Natural killer cell (primary cell): ENCODE measurements at regions of chr17 and their contacts with region 1.

Region 1: DNA sequence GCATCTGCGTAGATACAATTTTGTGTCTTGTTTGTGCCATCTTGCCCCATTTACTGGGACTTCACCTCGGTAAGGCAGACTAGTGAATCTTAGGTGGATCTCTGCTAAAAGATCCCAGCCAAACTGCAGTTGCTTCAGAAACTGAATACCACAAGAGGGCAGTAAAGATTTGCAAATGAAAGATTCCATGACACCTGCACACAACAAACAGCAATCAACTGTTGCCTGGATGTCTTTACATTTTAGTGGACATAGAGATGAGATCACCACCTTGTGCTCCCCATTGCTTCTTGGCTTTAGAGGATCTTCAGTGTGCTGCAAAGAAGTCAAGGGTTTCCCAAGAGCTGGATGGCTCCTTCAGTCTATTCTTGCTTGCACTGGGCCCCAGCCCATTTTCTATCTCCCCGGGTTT is 119.2 kb upstream of the CACNG5 start:
- DNase-seq: peak in 1 of 2 donors; percentile 65
- ATAC-seq: peak in 1 of 3 donors; percentile 24
- H3K4me3 ChIP-seq: no peak overlapping the region
- H3K4me3 Mint-ChIP-seq: no peak overlapping the region
- H3K27ac ChIP-seq: no peak overlapping the region
- H3K27ac Mint-ChIP-seq: no peak overlapping the region
- H3K4me1 ChIP-seq: peaks cover 46% of the 10 kb centered on the region
- H3K4me1 Mint-ChIP-seq: peaks cover 35 to 43% of the 10 kb centered on the region in 2 donors
- H3K27me3 ChIP-seq: no peaks in the 10 kb centered on the region
- H3K27me3 Mint-ChIP-seq: no peaks in the 10 kb centered on the region
- CTCF ChIP-seq: peak; percentile 64

Region 2: GRCh38 chr17:66655861-66656260 is 59.9 kb before region 1 on chr17:
- intact Hi-C with region 1: no loop called
- DNase-seq: no peak
- ATAC-seq: no peak
- H3K4me3 ChIP-seq: no peak overlapping the region
- H3K4me3 Mint-ChIP-seq: no peak overlapping the region
- H3K27ac ChIP-seq: no peak overlapping the region
- H3K27ac Mint-ChIP-seq: no peak overlapping the region
- H3K4me1 ChIP-seq: peaks cover 6% of the 10 kb centered on the region
- H3K4me1 Mint-ChIP-seq: peaks cover 3 to 7% of the 10 kb centered on the region in 2 donors
- H3K27me3 ChIP-seq: no peaks in the 10 kb centered on the region
- H3K27me3 Mint-ChIP-seq: no peaks in the 10 kb centered on the region
- CTCF ChIP-seq: no peak

Region 3: DNA sequence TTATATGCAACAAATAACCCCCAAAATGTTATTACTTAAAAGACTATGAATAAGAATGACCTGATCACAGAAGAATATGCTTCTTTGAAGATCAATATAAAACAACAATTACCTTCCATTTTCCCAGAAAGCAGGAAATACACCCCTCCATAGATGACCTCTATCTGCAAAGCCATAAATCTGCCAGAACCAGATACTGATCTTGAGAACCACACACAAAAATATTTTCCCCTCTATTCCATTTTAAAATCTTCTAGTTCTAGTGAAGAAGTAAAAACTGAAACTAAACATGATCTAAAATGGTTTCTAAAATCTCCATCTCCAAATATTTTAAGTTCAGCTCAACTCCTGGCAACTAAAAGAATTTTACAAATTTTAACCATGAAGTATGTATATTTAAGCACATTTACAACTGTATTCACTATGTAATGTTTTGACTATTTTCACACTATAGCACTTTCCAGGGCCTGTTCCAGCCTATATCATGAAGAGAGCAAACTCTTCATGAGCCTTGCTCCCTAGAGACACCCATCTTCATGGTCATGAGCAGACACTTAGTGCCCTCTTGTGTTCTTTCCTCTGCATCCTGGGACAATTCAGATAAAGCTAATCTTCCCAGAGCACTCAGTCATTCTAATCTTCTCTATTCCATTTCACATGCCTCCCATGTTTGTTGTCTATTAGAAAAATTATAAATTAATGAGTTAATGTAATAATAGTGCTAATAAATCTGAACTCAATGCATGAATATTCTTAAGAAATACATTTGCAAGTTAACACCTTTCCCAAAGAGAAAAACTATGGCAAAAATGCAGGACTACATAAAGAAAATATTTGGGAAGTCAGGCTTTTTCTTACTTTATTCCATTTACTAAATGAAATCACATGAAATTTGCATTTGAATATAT is 442.2 kb after region 1 on chr17:
- intact Hi-C with region 1: loop called (anchors 5 kb)
- DNase-seq: peak in 1 of 2 donors; percentile 19
- ATAC-seq: peak; percentile 62 to 71 (median 70)
- H3K4me3 ChIP-seq: no peak overlapping the region
- H3K4me3 Mint-ChIP-seq: peak overlapping the region; percentile 35
- H3K27ac ChIP-seq: peak overlapping the region; percentile 11
- H3K27ac Mint-ChIP-seq: peak overlapping the region; percentile 76 to 80
- H3K4me1 ChIP-seq: peaks cover 3% of the 10 kb centered on the region
- H3K4me1 Mint-ChIP-seq: peaks cover 38 to 44% of the 10 kb centered on the region in 2 donors
- H3K27me3 ChIP-seq: no peaks in the 10 kb centered on the region
- H3K27me3 Mint-ChIP-seq: no peaks in the 10 kb centered on the region
- CTCF ChIP-seq: no peak